GM10248 (cell line): ENCODE measurements at regions of chr6 and their contacts with region 1.

Region 1: GRCh38 chr6:73520688-73521350 is at the start of gene EEF1A1:
- DNase-seq: peak; percentile 93
- CTCF ChIP-seq: no peak

Region 2: DNA sequence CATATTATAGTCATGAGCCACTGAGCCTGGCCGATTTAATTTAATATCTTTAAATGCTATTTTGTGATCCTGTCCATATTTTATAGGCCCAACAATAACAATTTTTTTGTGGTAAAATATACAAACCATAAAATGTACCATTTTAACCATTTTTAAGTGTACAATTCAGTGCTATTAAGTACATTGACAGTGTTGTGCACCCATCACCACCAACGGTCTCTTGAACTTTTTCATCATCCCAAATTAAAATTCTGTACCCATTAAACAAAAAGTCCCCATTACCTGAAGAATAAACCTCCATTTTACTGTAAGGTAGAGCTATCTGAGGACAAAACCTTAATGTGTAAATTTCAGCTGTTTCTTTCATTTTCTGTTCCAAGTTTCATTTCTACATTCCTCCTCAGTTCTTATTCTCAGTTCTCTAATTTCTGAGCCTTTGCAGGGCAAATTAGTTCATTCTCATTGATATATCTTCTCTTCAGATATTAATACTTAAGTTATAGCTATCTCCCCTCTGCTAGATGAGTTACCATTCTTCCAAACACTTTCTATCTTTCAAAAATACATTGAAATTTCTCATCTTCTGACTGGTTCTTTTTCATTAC is 49.0 kb before region 1 on chr6:
- CTCF ChIA-PET with region 1: interaction called, 4 read pairs
- POLR2A ChIA-PET with region 1: interaction called, 11 read pairs
- DNase-seq: peak; percentile 59
- CTCF ChIP-seq: no peak

Region 3: DNA sequence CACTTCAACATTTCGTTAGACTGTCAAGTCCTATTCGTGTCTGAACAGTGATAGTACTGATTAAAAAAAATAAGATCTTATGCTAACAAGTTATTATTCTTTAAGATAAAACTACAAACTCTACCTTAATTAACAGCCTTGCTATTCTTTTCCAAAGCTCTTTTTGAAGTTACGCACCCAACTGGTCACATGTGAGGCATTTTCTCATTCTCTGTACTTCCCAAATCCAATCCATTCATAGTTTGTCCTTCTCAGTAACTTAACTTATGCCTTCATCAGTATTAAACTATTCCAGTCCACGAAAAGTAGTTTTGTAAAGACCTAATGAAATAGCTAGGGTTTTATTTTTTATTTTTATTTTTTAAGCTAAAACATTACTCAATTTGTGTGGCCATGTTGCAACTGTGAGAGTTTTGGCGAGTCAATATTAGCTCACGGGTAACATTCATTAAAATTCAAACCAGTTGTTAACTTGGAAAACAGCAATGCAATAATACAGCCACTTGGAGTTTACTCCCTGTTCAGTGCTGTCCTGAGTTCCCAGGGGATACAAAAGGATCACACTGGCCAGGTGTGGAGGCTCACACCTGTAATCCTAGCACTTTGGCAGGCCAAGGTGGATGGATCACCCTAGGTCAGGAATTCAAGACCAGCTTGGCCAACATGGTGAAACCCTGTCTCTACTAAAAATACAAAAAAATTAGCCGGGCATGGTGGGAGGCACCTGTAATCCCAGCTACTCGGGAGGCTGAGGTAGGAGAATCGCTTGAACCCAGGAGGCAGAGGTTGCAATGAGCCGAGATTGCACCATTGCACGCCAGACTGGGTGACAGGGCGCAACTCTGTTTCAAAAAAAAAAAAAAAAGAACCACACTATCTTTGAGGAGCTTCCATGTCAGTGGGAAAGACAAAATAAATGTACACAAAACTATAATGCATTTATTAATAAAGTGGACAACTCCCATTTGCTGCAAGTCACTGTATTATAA is 27.9 kb after region 1 on chr6:
- CTCF ChIA-PET with region 1: interaction called, 12 read pairs
- POLR2A ChIA-PET with region 1: interaction called, 3 read pairs
- DNase-seq: no peak
- CTCF ChIP-seq: no peak

Region 4: GRCh38 chr6:73580247-73581149 is 59.7 kb after region 1 on chr6:
- CTCF ChIA-PET with region 1: interaction called, 12 read pairs
- POLR2A ChIA-PET with region 1: interaction called, 23 read pairs
- DNase-seq: peak; percentile 70
- CTCF ChIP-seq: peak; percentile 45

Region 5: DNA sequence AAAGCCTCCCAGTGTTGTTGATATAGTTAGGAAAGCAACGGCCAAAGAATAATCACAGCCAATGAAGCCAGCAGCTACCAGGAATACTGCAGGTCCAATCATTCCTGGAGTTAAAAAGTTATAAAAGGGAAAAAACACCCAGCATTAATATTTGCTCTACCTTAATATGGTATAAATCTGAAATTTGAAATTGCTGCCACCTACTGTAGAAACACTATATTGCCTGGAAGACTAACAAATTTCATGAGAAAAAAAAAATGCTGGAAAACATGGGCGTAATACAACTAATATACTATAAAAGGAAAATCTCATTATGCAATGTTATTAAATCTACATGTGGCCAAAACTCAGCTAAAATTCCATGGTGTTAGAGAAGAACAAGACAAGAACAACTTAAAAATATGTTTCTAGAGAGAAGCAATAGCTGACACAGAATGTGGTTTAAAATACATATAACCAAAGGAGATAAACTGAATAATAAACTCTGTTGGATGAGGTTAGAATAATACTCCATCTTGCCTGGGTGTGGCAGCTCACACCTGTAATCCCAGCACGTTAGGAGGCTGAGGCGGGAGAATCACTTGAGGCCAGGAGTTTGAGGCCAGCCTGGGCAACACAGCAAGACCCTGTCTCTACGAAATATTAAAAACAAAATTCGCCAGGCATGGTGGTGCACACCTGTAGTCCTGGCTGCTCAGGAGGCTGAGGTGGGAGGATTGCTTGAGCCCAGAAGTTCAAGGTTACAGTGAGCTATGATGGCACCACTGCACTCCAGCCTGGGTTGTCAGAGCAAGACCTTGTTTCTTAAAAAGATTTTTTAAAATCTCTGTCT is 89.8 kb after region 1 on chr6:
- CTCF ChIA-PET with region 1: interaction called, 53 read pairs
- POLR2A ChIA-PET with region 1: interaction called, 3 read pairs
- DNase-seq: peak; percentile 44
- CTCF ChIP-seq: peak; percentile 45

Region 6: GRCh38 chr6:73653571-73654424 is 133.0 kb after region 1 on chr6 and contains the start of gene SLC17A5:
- CTCF ChIA-PET with region 1: interaction called, 18 read pairs
- POLR2A ChIA-PET with region 1: interaction called, 17 read pairs
- DNase-seq: peak; percentile 95
- CTCF ChIP-seq: no peak